ENCODE measurements at regions of chr4 and their contacts with region 1.

Region 1: DNA sequence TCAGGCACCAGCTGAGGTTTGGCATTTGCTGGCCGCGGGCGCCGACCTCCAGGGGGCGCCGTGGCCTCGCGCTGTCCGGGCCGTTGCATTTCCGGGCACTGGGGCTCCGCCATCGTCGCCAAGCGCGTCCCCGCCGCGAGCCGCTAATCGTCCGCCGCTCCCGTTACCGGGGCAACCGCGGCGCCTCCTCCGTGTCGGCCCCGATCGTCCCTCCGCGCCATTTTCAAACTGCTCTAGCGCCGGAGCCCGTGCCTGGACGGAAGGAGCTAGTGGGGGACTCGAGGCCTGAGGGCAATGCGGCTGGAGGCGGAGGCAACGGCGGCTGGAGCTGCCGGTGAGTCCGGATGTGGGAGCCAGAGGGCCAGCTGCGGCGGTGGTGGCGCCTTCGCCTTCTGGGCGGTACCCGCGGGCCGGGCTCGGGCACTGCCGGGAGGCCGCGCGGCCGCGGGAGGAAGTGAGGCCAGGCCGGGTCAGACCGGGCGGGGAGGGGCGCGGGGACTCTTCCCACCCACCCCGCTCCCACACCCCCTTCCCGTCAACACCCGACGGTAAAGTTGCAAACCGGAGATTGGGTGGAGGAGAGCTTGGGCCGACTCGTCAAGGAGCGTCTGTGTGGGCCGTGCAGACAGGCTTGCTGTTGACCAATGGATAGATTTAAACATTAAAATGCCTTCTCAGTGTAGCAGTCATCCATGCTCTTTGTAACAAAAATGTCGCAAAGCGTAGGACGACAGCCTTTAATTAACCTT is at the start of gene CEP135:
- DNase-seq: peak; percentile 96
- H3K4me3 ChIP-seq: peak within 1 kb of the TSS; percentile 65 to 79
- H3K27ac ChIP-seq: peak within 1 kb of the TSS; percentile 98 to 99
- H3K4me1 ChIP-seq: peaks cover 0 to 7% of the 10 kb centered on the region in 2 experiments; a peak in 3 of 4 replicates
- H3K27me3 ChIP-seq: no peaks in the 10 kb centered on the region
- CTCF ChIP-seq: peak; percentile 92
- EP300 ChIP-seq: peak in 1 of 2 experiments; percentile 21; a peak in 1 of 4 replicates
- RAD21 ChIP-seq: peak; percentile 80
- polyA plus RNA-seq, gene CEP135: 1.6 and 2.4 TPM in 2 replicates

Region 2: DNA sequence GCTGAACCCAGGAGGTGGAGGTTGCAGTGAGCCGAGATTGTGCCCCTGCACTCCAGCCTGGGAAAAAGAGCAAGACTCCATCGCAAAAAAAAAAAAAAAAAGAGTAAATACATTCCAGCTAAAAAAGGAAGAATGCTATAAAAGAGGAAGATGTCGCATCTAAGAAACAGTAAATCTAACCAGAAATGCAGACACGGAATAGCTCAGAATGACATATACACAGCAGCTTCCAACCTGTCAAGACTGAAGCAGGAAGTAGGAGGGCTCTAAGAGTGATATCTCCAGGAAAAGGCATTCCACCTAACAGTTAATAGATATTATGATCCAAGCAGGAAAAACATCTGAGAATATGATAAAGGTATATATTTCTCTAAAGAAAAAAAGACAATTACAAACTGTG is 418.2 kb before region 1 on chr4:
- CTCF ChIA-PET with region 1: no interaction called
- POLR2A ChIA-PET with region 1: no interaction called
- DNase-seq: no peak
- H3K4me3 ChIP-seq: no peak overlapping the region
- H3K27ac ChIP-seq: no peak overlapping the region
- H3K4me1 ChIP-seq: no peaks in the 10 kb centered on the region
- H3K27me3 ChIP-seq: no peaks in the 10 kb centered on the region
- CTCF ChIP-seq: no peak
- EP300 ChIP-seq: no peak
- RAD21 ChIP-seq: no peak

Region 3: DNA sequence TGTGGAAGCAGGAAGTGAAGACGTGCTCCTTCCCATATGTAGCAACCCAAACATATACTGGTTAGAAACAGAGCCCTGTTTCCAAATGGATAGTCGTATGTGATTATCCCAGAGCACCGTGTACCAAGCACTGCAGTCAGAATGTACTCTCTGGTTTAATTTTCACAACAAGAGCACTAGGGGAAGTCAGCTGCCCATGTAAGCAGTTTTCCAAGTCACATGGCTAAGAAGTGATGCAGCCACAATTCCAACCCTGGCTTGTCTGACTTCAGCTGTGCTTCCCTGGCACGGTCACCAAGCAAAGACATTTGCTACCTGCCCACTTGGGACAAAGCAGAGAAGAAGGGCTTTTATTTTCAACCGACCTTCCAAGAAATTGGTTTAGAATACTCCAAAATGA is 28.3 kb before region 1 on chr4:
- CTCF ChIA-PET with region 1: interaction called, 11 read pairs
- POLR2A ChIA-PET with region 1: no interaction called
- DNase-seq: no peak
- H3K4me3 ChIP-seq: no peak overlapping the region
- H3K27ac ChIP-seq: no peak overlapping the region
- H3K4me1 ChIP-seq: no peaks in the 10 kb centered on the region
- H3K27me3 ChIP-seq: no peaks in the 10 kb centered on the region
- CTCF ChIP-seq: no peak
- EP300 ChIP-seq: no peak
- RAD21 ChIP-seq: no peak

Region 4: DNA sequence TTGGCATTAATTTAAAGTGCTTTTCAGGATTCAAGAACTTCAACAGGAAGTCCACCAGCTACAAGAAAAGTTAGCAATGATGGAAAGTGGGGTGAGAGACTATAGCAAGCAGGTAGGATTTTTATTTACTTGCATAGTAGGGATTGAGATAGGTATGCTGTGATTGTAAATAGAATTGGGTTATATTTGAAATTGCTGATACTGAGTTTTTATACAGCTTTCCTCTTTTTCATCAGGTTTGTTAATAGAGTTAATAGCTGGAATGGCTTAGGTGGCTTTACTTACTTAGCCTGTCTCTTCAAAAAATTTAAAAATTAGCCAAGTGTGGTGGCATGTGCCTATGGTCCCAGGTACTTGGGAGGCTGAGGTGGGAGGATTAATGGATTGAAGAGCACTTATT is 10.8 kb after region 1 on chr4:
- CTCF ChIA-PET with region 1: interaction called, 25 read pairs
- POLR2A ChIA-PET with region 1: no interaction called
- DNase-seq: no peak
- H3K4me3 ChIP-seq: no peak overlapping the region
- H3K27ac ChIP-seq: no peak overlapping the region
- H3K4me1 ChIP-seq: no peaks in the 10 kb centered on the region
- H3K27me3 ChIP-seq: no peaks in the 10 kb centered on the region
- CTCF ChIP-seq: no peak
- EP300 ChIP-seq: no peak
- RAD21 ChIP-seq: no peak

Region 5: DNA sequence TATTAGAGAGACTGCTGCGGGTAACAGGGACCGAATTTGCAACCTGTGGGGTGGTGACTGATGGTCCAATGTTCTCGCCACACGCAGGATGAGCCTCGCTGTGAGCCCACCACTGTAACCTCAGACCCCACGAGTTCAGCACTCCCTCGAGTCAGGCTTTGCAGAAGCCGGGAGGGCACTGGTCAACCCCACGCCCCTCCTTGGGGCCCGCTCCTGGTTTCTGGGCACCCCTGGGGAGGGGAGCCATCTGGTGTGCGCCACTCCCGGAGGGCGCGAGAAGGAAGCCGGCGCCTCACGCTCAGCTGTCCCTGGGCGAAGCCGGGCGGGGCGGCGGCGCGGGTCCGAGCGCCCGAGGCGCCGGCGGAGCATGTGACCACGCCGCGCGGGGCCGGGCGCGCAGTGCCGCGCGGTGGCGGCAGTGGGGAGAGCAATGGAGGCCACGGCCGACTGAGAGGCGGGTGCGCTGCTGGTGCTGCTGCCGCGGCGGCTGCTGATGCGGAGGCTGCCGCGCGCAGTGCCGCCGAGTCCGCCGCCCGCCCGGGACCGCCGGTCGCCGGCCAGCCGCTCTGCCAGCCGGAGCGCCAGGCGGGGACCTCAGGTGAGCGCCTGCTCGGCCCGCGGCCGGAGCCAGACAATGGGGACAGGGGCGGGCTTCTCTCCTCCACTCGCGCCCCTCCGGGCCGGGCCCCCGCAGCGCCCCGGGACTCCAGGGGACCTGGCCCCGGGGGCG is 100.0 kb after region 1 on chr4:
- CTCF ChIA-PET with region 1: interaction called, 32 read pairs
- POLR2A ChIA-PET with region 1: interaction called, 11 read pairs
- DNase-seq: peak; percentile 89
- H3K4me3 ChIP-seq: peak overlapping the region; percentile 89 to 94
- H3K27ac ChIP-seq: peak overlapping the region; percentile 58 to 95; a peak in 3 of 4 replicates
- H3K4me1 ChIP-seq: peaks cover 0 to 8% of the 10 kb centered on the region in 2 experiments; a peak in 3 of 4 replicates
- H3K27me3 ChIP-seq: no peaks in the 10 kb centered on the region
- CTCF ChIP-seq: peak; percentile 12; the same call in 1 of the 2 replicates
- EP300 ChIP-seq: peak; percentile 5 to 28; a peak in 2 of 4 replicates
- RAD21 ChIP-seq: peak; percentile 48

Region 6: DNA sequence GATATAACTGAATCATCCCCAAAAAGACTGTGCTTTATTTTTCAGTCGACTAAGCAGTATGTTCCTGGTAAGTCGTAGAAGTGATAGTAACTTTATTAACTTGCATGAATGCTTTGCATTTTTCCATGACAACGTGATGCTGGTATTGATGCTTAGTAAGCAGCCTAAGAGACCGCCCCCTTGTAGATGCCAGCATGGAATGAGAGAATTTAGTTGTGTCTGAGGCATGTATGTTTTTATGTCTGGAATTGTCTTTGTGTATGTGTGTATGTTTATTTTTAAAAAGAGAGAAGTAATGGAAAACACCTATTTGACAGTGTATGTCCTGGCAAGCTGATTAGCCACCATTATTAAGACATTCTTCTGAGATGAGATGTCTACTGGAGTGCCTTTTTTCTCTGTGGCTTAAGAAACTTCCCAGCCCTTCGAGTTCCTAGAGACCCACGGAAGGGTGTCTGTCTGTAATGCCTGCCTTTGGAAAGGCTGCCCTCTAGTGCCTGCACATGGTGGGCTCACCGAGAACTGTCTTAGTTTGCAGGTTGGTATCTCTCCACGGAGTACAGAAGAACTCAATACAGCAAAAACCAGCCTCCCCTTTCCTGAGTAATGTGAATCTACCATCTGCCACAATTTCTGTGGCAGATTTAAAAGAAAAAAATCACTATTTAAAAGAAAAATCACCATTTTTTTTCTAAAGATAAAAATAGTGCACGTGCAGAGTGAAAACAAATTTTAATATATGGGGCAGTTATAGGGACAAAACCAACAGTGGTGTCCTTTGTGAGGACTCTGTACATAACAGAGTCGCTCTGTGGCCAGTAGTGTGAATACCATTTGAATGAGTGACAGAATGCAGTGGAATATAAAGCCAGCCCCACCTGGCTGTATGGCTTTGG is 352.5 kb after region 1 on chr4:
- CTCF ChIA-PET with region 1: interaction called, 61 read pairs
- POLR2A ChIA-PET with region 1: no interaction called
- DNase-seq: peak; percentile 75
- H3K4me3 ChIP-seq: peak overlapping the region in 1 of 2 experiments; percentile 33; a peak in 1 of 4 replicates
- H3K27ac ChIP-seq: peak overlapping the region; percentile 49 to 71; a peak in 3 of 4 replicates
- H3K4me1 ChIP-seq: no peaks in the 10 kb centered on the region; a peak in 2 of 4 replicates
- H3K27me3 ChIP-seq: no peaks in the 10 kb centered on the region
- CTCF ChIP-seq: peak; percentile 98
- EP300 ChIP-seq: no peak
- RAD21 ChIP-seq: peak; percentile 100

Region 7: GRCh38 chr4:56387023-56388001 is 438.4 kb after region 1 on chr4 and contains the start of gene AASDH:
- CTCF ChIA-PET with region 1: interaction called, 12 read pairs
- POLR2A ChIA-PET with region 1: interaction called, 6 read pairs
- DNase-seq: peak; percentile 86
- H3K4me3 ChIP-seq: peak within 1 kb of the TSS; percentile 90
- H3K27ac ChIP-seq: peak within 1 kb of the TSS; percentile 98
- H3K4me1 ChIP-seq: peaks cover 0 to 12% of the 10 kb centered on the region in 2 experiments; a peak in 3 of 4 replicates
- H3K27me3 ChIP-seq: no peaks in the 10 kb centered on the region
- CTCF ChIP-seq: no peak
- EP300 ChIP-seq: peak in 1 of 2 experiments; percentile 17; a peak in 1 of 4 replicates
- RAD21 ChIP-seq: no peak; the same call in 1 of the 2 replicates
- polyA plus RNA-seq, gene AASDH: 4.4 and 5.6 TPM in 2 replicates